GM12878 (cell line): ENCODE measurements at regions of chr16 and their contacts with region 1.

Region 1: DNA sequence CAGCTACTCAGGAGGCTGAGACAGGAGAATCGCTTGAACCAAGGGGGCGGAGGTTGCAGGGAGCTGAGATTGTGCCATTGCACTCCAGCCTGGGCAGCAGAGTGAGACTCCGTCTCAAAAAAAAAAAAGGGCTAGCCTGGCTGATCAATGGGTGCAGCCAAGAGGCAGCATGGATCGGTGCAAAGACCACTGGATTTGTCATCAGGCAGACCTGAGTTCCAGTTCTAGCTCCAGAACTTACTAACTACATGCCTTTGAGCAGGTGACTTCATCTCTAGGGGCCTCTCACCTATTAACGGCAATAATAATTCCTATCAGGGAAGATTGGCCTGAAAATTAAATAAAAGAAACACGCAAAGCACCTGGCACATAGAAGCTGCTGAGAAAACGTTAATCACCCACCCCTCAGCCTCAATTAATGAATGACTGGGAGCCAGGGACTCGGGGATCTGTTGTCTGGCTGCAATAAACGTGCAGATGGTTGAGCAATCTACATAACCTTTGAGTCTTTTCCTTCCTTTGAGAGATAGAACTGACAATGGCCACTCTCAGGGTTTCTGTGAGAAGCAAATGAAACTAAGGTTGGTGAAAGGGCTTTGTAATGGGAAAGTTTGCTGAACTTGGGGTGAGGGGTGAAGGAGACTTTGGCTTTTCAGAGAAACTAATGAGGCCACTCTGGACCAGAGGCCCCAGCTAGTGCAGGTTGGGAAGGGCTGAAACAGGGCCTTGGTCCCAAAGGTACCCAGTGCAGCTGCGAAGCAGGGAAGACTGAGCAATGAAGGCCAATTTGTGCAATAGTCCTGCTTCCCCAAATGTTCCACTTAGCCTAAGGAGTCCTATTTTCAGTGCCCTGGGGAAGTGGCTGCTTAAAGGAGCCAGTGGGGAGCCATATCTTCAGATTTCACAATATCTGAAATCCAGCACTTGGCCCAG is 7.6 kb downstream of the SEZ6L2 start:
- DNase-seq: no peak
- ATAC-seq: no peak
- H3K4me3 ChIP-seq: no peak overlapping the region
- H3K27ac ChIP-seq: no peak overlapping the region
- H3K4me1 ChIP-seq: no peaks in the 10 kb centered on the region
- H3K27me3 ChIP-seq: no peaks in the 10 kb centered on the region
- CTCF ChIP-seq: no peak
- EP300 ChIP-seq: no peak
- POLR2A ChIP-seq: no peak
- RAD21 ChIP-seq: no peak

Region 2: GRCh38 chr16:29664091-29664921 is 227.5 kb before region 1 on chr16:
- CTCF ChIA-PET with region 1: no interaction called
- POLR2A ChIA-PET with region 1: no interaction called
- RAD21 ChIA-PET with region 1: no interaction called
- SMC1A ChIA-PET with region 1: no interaction called
- in situ Hi-C with region 1: no loop called
- intact Hi-C with region 1: no loop called
- DNase-seq: no peak
- ATAC-seq: peak; percentile 20
- H3K4me3 ChIP-seq: peak overlapping the region; percentile 99
- H3K27ac ChIP-seq: peak overlapping the region; percentile 81
- H3K4me1 ChIP-seq: peaks cover 12% of the 10 kb centered on the region
- H3K27me3 ChIP-seq: no peaks in the 10 kb centered on the region
- CTCF ChIP-seq: peak; percentile 17 to 23 (median 17); a peak in 2 of 6 replicates
- EP300 ChIP-seq: no peak
- POLR2A ChIP-seq: peak; percentile 71
- RAD21 ChIP-seq: no peak

Region 3: GRCh38 chr16:29857133-29857760 is 34.5 kb before region 1 on chr16:
- CTCF ChIA-PET with region 1: no interaction called
- POLR2A ChIA-PET with region 1: no interaction called
- RAD21 ChIA-PET with region 1: no interaction called
- SMC1A ChIA-PET with region 1: no interaction called
- in situ Hi-C with region 1: no loop called
- intact Hi-C with region 1: no loop called
- DNase-seq: no peak
- ATAC-seq: no peak
- H3K4me3 ChIP-seq: no peak overlapping the region
- H3K27ac ChIP-seq: no peak overlapping the region
- H3K4me1 ChIP-seq: no peaks in the 10 kb centered on the region
- H3K27me3 ChIP-seq: no peaks in the 10 kb centered on the region
- CTCF ChIP-seq: no peak
- EP300 ChIP-seq: no peak
- POLR2A ChIP-seq: no peak
- RAD21 ChIP-seq: no peak

Region 4: GRCh38 chr16:29943846-29944669 is 52.3 kb after region 1 on chr16:
- CTCF ChIA-PET with region 1: no interaction called
- POLR2A ChIA-PET with region 1: no interaction called
- RAD21 ChIA-PET with region 1: no interaction called
- SMC1A ChIA-PET with region 1: no interaction called
- in situ Hi-C with region 1: no loop called
- intact Hi-C with region 1: loop called (anchors 2 kb)
- DNase-seq: no peak
- ATAC-seq: no peak
- H3K4me3 ChIP-seq: no peak overlapping the region
- H3K27ac ChIP-seq: no peak overlapping the region
- H3K4me1 ChIP-seq: no peaks in the 10 kb centered on the region
- H3K27me3 ChIP-seq: no peaks in the 10 kb centered on the region; a peak in 2 of 4 replicates
- CTCF ChIP-seq: no peak
- EP300 ChIP-seq: no peak
- POLR2A ChIP-seq: no peak
- RAD21 ChIP-seq: no peak

Region 5: GRCh38 chr16:29961479-29962343 is 69.9 kb after region 1 on chr16 and contains the start of gene TMEM219:
- CTCF ChIA-PET with region 1: no interaction called
- POLR2A ChIA-PET with region 1: no interaction called
- RAD21 ChIA-PET with region 1: no interaction called
- SMC1A ChIA-PET with region 1: no interaction called
- in situ Hi-C with region 1: no loop called
- intact Hi-C with region 1: no loop called
- DNase-seq: peak; percentile 70
- ATAC-seq: peak; percentile 92
- H3K4me3 ChIP-seq: peak within 1 kb of the TSS; percentile 82
- H3K27ac ChIP-seq: peak within 1 kb of the TSS; percentile 79
- H3K4me1 ChIP-seq: peaks cover 2% of the 10 kb centered on the region; the same call in 1 of the 2 replicates
- H3K27me3 ChIP-seq: no peaks in the 10 kb centered on the region
- CTCF ChIP-seq: peak; percentile 17 to 32 (median 22); a peak in 2 of 6 replicates
- EP300 ChIP-seq: no peak
- POLR2A ChIP-seq: peak; percentile 80
- RAD21 ChIP-seq: no peak
- polyA plus RNA-seq, gene TMEM219: 43.0 to 56.5 TPM